GM13976 (cell line): ENCODE measurements at regions of chr3 and their contacts with region 1.

Region 1: DNA sequence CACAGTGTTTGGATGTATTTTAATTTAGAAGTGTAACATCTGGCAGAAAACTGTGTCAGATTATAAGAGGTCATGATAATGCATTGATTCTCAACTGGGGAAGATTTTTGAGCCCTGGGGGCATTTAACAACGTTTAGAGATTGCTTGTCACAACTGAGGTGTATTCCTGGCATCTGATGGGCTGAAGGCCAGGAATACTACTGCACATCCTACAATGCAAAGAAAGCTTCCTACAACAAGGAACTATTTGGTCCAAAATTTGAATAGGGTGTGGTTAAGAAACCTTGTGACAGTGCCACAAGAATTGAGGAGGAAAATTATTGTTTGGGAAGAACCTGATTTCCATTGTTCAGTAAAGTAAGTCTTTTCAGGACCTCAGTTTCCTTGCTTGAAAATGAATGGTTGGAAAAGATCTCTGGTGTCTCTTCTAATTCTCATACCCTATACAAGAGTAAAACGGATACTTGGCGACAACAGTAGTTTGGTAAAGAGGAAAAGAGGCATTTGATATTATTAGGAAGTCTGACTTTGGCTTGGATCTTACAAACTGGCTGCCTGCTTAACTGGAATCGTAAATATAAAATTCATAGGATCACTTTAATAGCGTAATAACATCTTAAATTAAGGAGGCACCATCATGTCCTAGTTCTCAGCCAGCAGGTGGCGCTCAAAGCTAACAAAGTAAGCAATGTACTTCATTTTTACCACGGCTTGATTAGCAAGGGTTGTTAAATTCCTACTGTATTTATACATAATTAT is 4.3 kb downstream of the DAZL start:
- DNase-seq: peak; percentile 64
- CTCF ChIP-seq: peak; percentile 56

Region 2: DNA sequence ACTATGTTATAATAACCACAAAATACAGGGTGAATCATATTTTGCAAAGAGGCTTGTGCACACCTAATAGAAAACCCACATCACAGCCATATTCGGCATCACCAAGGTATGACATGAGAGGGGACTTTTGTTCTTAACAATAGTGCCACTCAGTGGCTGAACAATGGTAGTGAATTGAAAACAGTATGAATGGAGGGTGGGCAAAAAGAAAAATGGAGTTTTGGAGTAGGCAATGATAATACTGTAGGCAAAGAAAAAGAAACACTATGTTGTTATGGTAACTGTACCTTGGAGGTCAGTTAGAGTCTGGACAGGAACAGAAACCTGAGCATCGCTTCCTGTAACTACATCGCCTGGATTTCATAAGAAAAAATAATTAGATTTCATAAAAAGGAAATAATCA is 632.4 kb after region 1 on chr3:
- in situ Hi-C with region 1: loop called (anchors 10 kb)
- DNase-seq: peak; percentile 28
- CTCF ChIP-seq: peak; percentile 53

Region 3: DNA sequence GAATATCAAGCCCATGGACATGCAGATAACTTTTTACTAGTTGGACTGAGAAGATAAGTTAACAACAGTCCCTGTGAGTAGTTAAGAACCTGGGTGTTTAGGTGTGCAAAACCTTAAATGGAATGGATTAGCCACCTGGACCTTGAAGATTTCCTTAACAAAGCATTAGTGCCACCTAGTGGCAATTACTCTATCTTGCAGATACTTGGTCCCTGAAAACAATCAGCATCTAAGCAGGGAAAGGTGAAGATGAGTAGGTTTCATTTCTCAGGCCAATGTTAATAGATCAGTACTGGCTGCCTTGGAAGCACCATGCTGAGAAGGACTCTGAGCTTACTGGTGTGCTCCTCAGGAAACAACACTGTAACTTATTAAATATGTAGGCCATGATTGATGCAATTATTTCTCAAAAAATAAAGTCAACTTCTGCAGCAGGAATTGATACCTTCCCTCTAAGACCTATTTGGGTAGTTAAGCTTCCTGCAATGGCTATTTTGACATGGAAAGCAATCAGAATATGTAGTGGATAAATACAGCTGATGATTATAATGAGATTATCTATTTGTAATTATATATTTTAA is 812.1 kb after region 1 on chr3:
- in situ Hi-C with region 1: loop called (anchors 25 kb)
- DNase-seq: peak; percentile 20
- CTCF ChIP-seq: peak; percentile 63